PC-9 (cell line): ENCODE measurements at regions of chr21 and their contacts with region 1.

Region 1: GRCh38 chr21:33761441-33762036 is 119.2 kb downstream of the ITSN1 start:
- DNase-seq: peak; percentile 37 to 94
- H3K4me3 ChIP-seq: peak overlapping the region; percentile 47; the same call in 1 of the 2 replicates
- H3K27ac ChIP-seq: peak overlapping the region; percentile 92
- H3K4me1 ChIP-seq: peaks cover 33% of the 10 kb centered on the region
- H3K27me3 ChIP-seq: no peaks in the 10 kb centered on the region
- CTCF ChIP-seq: no peak

Region 2: DNA sequence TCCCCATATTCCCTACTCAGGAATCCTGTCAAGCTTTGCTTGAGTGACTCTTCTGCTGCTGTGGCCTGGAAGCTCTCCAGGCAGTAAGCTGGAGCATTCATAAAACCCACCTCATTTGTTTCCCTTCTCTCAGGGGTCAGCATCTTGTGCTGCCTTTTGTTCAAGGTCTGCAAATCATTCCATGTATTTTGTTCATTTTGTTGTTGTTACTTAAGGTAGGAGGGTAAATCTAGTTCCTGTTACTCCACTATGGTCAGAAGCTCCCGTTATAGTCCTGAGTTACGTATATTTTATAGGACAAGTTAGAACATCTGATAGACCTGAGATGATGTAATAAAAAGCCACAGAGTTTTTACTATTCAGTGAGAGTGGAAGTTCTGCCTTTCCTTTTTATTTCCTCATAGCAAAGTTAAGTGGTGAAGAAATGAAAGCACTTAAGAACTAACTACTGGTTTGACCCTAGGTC is 1043.7 kb before region 1 on chr21:
- CTCF ChIA-PET with region 1: no interaction called
- POLR2A ChIA-PET with region 1: no interaction called
- intact Hi-C with region 1: no loop called
- DNase-seq: no peak
- H3K4me3 ChIP-seq: no peak overlapping the region
- H3K27ac ChIP-seq: no peak overlapping the region
- H3K4me1 ChIP-seq: no peaks in the 10 kb centered on the region
- H3K27me3 ChIP-seq: no peaks in the 10 kb centered on the region
- CTCF ChIP-seq: no peak

Region 3: DNA sequence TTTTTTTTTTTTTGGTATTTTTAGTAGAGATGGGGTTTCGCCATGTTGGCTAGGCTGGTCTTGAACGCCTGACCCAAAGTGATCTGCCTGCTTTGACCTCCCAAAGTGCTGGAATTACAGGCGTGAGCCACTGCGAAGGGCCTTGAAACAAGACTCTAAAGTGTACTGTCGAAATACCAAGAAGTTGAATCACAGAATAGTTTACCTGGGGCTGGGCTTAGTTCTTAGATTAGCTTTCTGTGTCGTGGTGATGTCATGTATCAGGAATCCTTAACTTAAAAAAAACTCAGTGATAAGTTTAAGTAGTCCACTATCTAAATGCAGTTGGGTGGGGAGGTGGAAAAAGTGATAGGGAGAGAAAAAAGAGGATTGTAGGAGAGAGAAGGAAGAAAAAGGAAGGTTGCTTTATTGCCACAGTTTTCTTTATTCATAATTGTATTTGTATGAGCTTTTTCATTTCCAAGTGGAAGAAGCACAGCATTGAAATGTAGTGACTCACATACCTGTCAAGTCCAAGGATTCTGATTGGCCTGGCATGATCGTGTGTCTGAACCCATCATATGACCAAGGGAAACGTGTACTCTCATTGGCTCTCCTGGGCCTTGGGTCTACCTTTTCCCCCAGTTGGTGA is 105.8 kb before region 1 on chr21:
- CTCF ChIA-PET with region 1: no interaction called
- POLR2A ChIA-PET with region 1: interaction called, 5 read pairs
- intact Hi-C with region 1: loop called (anchors 5 kb)
- DNase-seq: peak; percentile 63 to 96
- H3K4me3 ChIP-seq: no peak overlapping the region; the same call in 1 of the 2 replicates
- H3K27ac ChIP-seq: peak overlapping the region; percentile 73
- H3K4me1 ChIP-seq: peaks cover 14% of the 10 kb centered on the region
- H3K27me3 ChIP-seq: no peaks in the 10 kb centered on the region
- CTCF ChIP-seq: no peak

Region 4: GRCh38 chr21:33682992-33683627 is 78.4 kb before region 1 on chr21:
- CTCF ChIA-PET with region 1: no interaction called
- POLR2A ChIA-PET with region 1: interaction called, 5 read pairs
- intact Hi-C with region 1: loop called (anchors 1 kb)
- DNase-seq: peak; percentile 61 to 96
- H3K4me3 ChIP-seq: peak overlapping the region; percentile 14; the same call in 1 of the 2 replicates
- H3K27ac ChIP-seq: peak overlapping the region; percentile 85
- H3K4me1 ChIP-seq: peaks cover 64% of the 10 kb centered on the region
- H3K27me3 ChIP-seq: no peaks in the 10 kb centered on the region
- CTCF ChIP-seq: no peak

Region 5: DNA sequence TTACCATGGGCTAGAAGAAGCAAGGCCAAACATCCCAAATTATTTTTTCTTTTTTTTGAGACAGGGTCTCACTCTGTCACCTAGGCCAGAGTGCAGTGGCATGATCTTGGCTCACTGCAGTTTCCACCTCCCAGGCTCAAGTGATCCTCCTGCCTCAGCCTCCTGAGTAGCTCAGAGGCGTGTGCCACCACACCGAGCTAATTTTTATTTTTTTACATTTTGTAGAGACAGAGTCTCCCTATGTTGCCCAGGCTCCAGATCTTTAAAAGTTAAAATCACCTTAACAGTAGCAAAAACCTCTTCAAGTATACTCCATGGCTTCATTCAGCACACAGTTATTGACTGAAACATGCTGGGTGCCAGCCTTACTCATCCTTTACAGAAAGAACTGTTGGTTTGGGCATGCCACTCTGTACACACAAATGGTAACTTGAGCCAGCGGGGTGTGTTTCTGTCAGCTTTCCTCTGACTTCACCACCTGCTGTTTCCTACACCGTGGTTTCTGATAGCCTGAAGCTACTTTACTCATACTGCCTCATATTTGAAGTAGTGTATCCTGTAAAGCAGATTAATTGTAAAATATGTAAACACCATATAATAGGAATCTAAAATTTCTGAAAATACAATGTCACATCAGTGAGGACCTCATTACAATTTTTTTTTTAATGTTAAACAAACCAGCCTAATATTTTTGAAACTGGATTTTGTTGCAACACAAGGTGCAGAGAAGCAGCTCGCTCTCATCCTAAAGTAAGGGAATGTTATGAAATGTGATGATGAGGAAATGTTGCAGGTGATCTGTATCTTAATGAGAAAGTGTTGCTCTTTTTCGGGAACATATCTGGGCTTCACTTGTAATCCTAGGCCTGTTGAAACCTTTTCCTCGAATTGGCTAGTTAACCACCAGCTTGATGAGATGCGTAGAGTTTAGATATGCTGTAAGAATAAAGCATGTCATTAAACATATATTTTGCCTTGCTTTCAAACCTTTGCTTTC is 40.2 kb after region 1 on chr21:
- CTCF ChIA-PET with region 1: no interaction called
- POLR2A ChIA-PET with region 1: no interaction called
- intact Hi-C with region 1: loop called (anchors 1 kb)
- DNase-seq: peak; percentile 72 to 96
- H3K4me3 ChIP-seq: peak overlapping the region; percentile 22; the same call in 1 of the 2 replicates
- H3K27ac ChIP-seq: peak overlapping the region; percentile 79
- H3K4me1 ChIP-seq: peaks cover 41% of the 10 kb centered on the region
- H3K27me3 ChIP-seq: no peaks in the 10 kb centered on the region
- CTCF ChIP-seq: no peak

Region 6: DNA sequence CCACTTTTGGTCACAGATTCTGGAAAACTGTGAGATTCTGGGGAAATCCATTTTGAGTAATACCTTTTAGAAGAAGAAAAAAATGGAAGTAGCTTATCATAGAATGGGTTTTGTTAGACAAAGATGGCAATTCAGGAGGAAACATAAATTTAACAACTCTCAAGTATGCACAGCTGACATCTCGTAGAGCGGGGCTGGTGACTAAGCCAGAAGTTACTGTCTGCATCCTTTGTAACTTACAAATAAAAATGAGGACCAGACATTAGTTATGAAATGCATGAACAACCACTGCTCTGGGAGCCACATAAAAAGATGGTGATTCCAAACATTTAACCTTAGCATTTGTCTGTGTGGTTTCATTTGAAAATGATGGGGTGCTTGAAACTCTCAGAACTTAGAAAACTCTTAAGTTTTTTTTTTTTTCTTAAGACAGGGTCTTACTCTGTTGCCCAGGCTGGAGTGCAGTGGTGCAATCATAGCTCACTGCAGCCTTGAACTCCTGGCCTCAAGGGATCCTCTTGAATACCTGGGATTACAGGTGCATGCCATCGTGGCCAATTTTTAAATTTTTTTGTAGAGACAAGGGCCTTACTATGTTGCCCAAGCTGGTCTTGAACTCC is 203.3 kb after region 1 on chr21:
- CTCF ChIA-PET with region 1: interaction called, 10 read pairs
- POLR2A ChIA-PET with region 1: no interaction called
- intact Hi-C with region 1: no loop called
- DNase-seq: no peak
- H3K4me3 ChIP-seq: no peak overlapping the region
- H3K27ac ChIP-seq: no peak overlapping the region
- H3K4me1 ChIP-seq: no peaks in the 10 kb centered on the region
- H3K27me3 ChIP-seq: no peaks in the 10 kb centered on the region
- CTCF ChIP-seq: no peak